ENCODE measurements at regions of chr9 and their contacts with region 1.

Region 1: DNA sequence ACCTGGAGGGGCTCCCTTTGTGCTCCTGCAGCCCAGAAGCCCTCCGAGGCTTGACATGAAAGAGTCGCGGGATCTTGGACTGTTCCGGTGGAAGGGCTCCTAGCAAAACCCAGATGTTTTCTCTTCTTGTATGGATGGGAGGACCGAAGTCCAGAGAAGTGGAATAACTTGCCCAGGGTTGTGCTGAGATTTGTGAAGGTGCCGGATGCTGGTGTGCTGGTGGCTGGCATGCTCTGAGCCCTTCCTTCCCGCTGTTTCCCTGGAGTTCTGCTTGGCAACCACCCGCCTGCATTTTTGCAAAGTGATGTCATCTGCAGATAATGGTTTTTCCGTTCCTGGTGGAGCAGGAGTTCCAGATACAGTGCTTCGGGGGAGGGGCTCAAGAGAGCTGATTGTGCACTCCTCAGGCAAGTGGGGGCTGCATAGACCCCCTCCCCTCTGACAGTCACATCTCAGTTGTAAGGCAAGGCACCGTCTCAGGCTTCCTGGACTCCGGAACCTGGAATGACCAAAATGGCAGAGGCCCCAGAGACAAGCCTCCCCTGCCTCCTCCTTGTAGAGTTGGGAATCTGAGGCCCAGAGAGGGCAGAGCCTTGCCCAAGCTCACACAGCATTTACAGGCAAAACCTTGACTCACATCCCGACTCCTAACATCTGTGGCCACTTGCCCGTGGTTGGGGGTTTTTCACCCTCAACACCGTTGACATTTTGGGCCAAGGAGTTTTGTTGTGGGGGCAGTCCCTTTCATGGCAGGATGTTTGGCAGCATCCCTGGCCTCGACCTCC is 157.0 kb downstream of the RGS3 start:
- DNase-seq: peak; percentile 93
- ATAC-seq: peak; percentile 65
- H3K4me3 ChIP-seq: no peak overlapping the region
- H3K27ac ChIP-seq: peak overlapping the region; percentile 96
- H3K4me1 ChIP-seq: peaks cover 38% of the 10 kb centered on the region
- H3K27me3 ChIP-seq: no peaks in the 10 kb centered on the region
- CTCF ChIP-seq: no peak
- POLR2A ChIP-seq: 0 out of 2 replicates have a peak, but pooled peaks have one; percentile 2
- RAD21 ChIP-seq: no peak; the same call in 1 of the 2 replicates

Region 2: DNA sequence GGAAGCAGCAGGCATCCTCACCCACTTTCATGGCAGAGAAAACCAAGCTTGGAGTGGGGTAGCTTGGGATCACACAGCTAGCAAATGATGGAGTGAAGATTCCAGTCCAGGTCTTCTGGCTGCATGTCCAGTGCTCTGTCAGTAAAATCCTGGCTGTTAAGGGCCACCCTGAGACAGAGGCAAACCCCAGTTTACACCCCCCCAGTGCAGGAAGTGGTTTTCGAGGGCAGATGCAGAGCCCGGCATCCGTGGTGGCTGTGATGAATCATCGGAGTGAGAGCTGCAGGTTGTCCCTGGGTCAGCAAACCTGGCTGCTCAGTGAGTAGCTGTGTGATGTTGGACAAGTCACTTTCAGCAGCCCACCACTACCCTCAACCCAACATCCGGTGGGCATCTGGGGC is 41.7 kb before region 1 on chr9:
- CTCF ChIA-PET with region 1: no interaction called
- POLR2A ChIA-PET with region 1: no interaction called
- dilution Hi-C with region 1: no loop called
- in situ Hi-C with region 1: no loop called
- intact Hi-C with region 1: no loop called
- DNase-seq: peak; percentile 97
- ATAC-seq: peak; percentile 72
- H3K4me3 ChIP-seq: no peak overlapping the region
- H3K27ac ChIP-seq: peak overlapping the region; percentile 63
- H3K4me1 ChIP-seq: peaks cover 45% of the 10 kb centered on the region
- H3K27me3 ChIP-seq: no peaks in the 10 kb centered on the region
- CTCF ChIP-seq: no peak
- POLR2A ChIP-seq: no peak
- RAD21 ChIP-seq: peak; percentile 36

Region 3: DNA sequence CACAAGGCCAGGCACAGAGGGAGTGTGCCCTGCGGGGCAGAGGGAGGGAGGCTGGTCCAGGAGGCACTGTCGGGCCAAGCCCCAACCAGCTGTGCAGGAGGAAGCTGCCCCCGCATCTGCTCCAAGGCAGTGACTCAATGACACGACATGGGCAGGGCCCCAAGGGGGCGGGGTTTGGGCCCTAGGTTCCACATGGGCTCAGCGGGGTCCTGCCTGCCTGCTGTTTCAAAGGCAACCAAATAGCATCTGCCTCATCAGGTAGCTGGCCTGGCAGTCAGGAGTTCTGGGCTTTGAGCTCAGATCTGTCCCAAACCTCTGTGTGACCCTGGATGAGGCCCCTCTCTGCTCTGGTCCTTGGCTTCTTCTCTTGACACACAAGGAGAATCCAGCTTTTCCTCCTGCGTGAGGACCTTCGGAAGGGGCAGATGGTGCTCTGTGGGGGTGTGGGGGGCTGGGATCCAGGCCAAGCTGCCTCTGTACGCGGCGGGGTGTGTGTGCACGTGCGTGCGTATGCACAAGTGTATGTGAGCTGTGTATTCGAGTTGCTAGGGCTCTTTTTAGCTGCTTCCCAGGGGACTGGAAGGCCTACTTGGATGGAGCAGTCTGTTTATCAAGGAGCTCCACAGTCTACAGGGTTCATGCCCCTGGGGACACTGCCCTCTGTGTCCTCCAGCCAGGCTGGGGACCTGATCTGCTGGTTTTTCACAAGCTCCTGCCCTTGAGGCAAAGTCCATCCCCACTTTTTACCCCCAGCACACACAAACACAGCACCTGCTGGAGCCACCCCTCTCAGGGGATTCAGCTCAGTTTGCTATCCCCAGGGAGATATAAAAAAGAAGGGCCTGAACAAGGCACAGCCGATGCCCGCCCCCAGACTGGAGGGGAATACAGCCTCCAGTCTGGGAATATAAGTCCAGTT is 18.2 kb before region 1 on chr9:
- CTCF ChIA-PET with region 1: interaction called, 4 read pairs
- POLR2A ChIA-PET with region 1: no interaction called
- dilution Hi-C with region 1: no loop called
- in situ Hi-C with region 1: no loop called
- intact Hi-C with region 1: loop called (anchors 2 kb)
- DNase-seq: peak; percentile 88
- ATAC-seq: peak; percentile 68
- H3K4me3 ChIP-seq: no peak overlapping the region
- H3K27ac ChIP-seq: peak overlapping the region; percentile 41
- H3K4me1 ChIP-seq: peaks cover 47% of the 10 kb centered on the region
- H3K27me3 ChIP-seq: no peaks in the 10 kb centered on the region
- CTCF ChIP-seq: no peak
- POLR2A ChIP-seq: no peak
- RAD21 ChIP-seq: peak; percentile 38